ENCODE measurements at regions of chr16 and their contacts with region 1.

Region 1: GRCh38 chr16:85986931-85987749 is 88.2 kb downstream of the IRF8 start:
- DNase-seq: peak; percentile 51
- ATAC-seq: no peak
- H3K4me3 ChIP-seq: no peak overlapping the region
- H3K4me3 Mint-ChIP-seq: peak overlapping the region; percentile 83
- H3K27ac ChIP-seq: no peak overlapping the region
- H3K27ac Mint-ChIP-seq: peak overlapping the region; percentile 81
- H3K4me1 ChIP-seq: peaks cover 96 to 100% of the 10 kb centered on the region in 2 donors
- H3K4me1 Mint-ChIP-seq: peaks cover 98% of the 10 kb centered on the region
- H3K27me3 ChIP-seq: no peaks in the 10 kb centered on the region
- H3K27me3 Mint-ChIP-seq: no peaks in the 10 kb centered on the region
- CTCF ChIP-seq: no peak

Region 2: DNA sequence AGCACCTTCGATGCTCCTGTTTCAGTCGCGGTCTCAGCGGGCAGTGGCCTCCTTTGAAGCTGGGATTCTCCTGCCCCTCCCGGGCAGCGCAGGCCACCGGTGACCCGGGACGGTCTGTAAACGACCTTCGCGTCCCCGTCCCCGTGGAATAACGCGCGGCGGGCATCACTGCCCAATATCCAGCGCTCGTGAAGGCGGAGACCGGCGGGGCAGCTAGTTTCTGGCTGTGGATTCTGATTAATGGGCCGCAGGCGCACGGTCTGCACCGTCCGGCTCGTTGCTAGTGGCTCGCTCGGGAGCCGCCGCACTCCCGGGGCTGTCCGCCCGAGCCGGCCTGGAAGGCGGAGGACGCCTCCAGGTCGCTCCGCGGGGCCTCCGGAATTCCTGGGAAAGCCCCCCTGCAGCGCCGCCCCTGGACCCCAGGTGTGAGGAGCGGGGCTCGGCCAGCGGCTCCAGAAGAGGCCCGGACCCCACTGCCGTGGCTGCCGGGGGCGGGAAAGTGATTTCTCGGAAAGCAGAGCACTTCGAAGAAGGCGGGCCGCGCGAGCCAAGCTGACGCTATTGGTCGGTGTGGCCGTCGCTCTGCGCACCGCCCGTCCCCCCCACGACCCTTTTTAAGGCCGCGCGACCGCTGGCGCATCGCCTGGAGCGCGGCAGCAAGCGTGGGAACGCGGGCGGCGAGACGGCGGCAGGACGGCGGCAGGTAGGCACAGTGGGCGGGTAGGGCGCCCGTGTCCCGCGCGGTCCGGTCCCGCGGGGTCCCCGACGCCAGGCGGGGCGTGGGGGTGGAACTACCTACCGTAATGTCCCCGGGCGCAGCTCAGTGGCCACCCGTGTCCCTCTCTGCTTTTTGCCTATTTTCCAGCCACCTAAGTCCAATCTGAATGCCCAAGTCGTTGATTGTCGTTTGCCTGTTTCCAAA is 88.4 kb before region 1 on chr16 and contains the start of gene IRF8:
- CTCF ChIA-PET with region 1: interaction called, 85 read pairs
- POLR2A ChIA-PET with region 1: interaction called, 10 read pairs
- intact Hi-C with region 1: loop called (anchors 2 kb)
- DNase-seq: peak; percentile 94
- ATAC-seq: peak; percentile 65
- H3K4me3 ChIP-seq: peak within 1 kb of the TSS; percentile 77 to 99 (median 88)
- H3K4me3 Mint-ChIP-seq: peak within 1 kb of the TSS; percentile 92
- H3K27ac ChIP-seq: peak within 1 kb of the TSS; percentile 93 to 97
- H3K27ac Mint-ChIP-seq: peak within 1 kb of the TSS; percentile 98
- H3K4me1 ChIP-seq: peaks cover 41 to 52% of the 10 kb centered on the region in 2 donors
- H3K4me1 Mint-ChIP-seq: peaks cover 63% of the 10 kb centered on the region
- H3K27me3 ChIP-seq: no peaks in the 10 kb centered on the region
- H3K27me3 Mint-ChIP-seq: no peaks in the 10 kb centered on the region
- CTCF ChIP-seq: no peak
- total RNA-seq, gene IRF8: 332 and 337 TPM in 2 replicates

Region 3: GRCh38 chr16:85928401-85928820 is 58.7 kb before region 1 on chr16:
- CTCF ChIA-PET with region 1: interaction called, 10 read pairs
- POLR2A ChIA-PET with region 1: interaction called, 3 read pairs
- intact Hi-C with region 1: loop called (anchors 5 kb)
- DNase-seq: peak; percentile 53
- ATAC-seq: peak; percentile 32
- H3K4me3 ChIP-seq: no peak overlapping the region
- H3K4me3 Mint-ChIP-seq: peak overlapping the region; percentile 72
- H3K27ac ChIP-seq: no peak overlapping the region
- H3K27ac Mint-ChIP-seq: peak overlapping the region; percentile 71
- H3K4me1 ChIP-seq: peaks cover 60 to 74% of the 10 kb centered on the region in 2 donors
- H3K4me1 Mint-ChIP-seq: peaks cover 82% of the 10 kb centered on the region
- H3K27me3 ChIP-seq: no peaks in the 10 kb centered on the region
- H3K27me3 Mint-ChIP-seq: no peaks in the 10 kb centered on the region
- CTCF ChIP-seq: no peak

Region 4: DNA sequence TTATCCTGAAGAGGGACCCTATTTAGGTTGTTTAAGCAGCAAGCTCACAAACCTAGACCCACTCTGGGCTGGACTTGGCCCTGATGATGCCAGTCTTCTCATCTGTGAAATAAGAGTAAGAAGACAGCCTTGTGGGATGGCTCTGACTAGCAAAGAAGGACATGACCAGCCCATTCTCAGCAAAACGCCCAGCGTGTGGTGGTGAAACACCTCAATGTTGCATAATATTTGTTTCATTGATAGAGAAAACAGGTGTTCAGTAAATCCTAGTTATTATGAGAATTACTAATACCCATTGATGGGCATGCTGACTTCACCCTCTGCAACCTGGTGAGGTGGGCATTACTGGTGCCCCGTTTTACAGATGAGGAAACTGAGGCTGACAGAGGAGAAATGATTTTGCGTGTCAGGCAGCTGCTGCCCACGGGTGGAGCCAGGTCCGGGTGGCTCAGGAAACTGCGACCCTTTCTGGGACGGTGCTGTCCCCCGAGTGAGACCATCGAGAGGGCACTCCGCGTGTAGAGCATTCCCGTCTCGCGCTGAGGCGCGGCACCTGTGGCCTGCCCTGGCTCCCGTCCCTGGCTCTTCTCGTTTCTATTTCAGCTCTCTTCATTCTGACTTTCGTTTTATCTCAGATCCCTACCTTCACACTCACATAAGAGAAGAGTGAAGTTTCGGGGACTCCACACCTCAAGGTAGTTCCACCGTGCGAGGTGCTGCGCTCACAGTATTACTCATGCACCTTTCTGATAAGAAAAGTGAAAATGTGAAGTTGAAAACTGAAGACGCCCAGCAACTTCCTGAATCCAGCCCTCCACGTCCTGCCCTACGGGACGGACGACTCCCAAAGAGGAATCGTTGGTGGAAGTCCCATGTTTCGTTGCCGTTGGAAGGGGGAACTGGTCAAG is 39.7 kb before region 1 on chr16:
- CTCF ChIA-PET with region 1: interaction called, 18 read pairs
- POLR2A ChIA-PET with region 1: interaction called, 5 read pairs
- intact Hi-C with region 1: loop called (anchors 1 kb)
- DNase-seq: peak; percentile 87
- ATAC-seq: peak; percentile 63
- H3K4me3 ChIP-seq: peak overlapping the region; percentile 41 to 68 (median 64)
- H3K4me3 Mint-ChIP-seq: peak overlapping the region; percentile 94
- H3K27ac ChIP-seq: peak overlapping the region; percentile 88 to 92
- H3K27ac Mint-ChIP-seq: peak overlapping the region; percentile 98
- H3K4me1 ChIP-seq: peaks cover 70 to 79% of the 10 kb centered on the region in 2 donors
- H3K4me1 Mint-ChIP-seq: peaks cover 84% of the 10 kb centered on the region
- H3K27me3 ChIP-seq: no peaks in the 10 kb centered on the region
- H3K27me3 Mint-ChIP-seq: no peaks in the 10 kb centered on the region
- CTCF ChIP-seq: no peak

Region 5: DNA sequence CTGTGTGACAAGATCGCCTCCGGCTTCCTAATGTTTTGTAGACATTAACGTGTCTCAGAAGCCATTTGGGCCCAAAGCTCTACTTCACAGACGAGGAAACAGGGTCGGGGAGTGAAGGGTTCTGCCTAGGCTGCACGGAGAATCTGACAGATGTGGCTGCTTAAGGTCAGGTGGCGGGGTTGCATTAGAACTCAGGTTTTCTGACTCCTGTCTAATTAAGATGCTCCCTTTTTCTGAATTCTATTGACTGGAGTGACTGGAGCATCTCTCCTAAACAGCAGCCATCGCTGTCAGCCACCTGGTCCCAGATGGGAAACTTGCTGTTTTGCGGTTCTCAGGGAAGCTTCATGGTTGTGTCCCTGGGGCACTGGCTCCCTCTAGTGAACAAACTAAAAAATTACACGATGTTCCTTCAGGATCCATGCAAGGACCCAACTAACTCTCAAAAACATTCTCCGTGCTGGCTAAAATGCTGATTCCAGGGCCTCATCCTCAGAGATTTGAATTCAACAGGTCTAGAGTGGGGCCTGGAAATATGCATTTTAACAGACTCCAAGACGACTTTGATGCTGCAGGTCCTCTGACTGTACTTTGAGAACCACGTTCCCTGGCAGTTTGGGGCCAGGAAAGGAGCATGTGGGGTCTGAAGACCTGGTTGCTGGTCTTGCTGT is 29.2 kb after region 1 on chr16:
- CTCF ChIA-PET with region 1: interaction called, 67 read pairs
- POLR2A ChIA-PET with region 1: no interaction called
- intact Hi-C with region 1: no loop called
- DNase-seq: peak; percentile 83
- ATAC-seq: peak; percentile 61
- H3K4me3 ChIP-seq: no peak overlapping the region
- H3K4me3 Mint-ChIP-seq: no peak overlapping the region
- H3K27ac ChIP-seq: no peak overlapping the region
- H3K27ac Mint-ChIP-seq: peak overlapping the region; percentile 43
- H3K4me1 ChIP-seq: peaks cover 32 to 40% of the 10 kb centered on the region in 2 donors
- H3K4me1 Mint-ChIP-seq: peaks cover 35% of the 10 kb centered on the region
- H3K27me3 ChIP-seq: peaks cover 0 to 28% (median 5%) of the 10 kb centered on the region in 4 experiments
- H3K27me3 Mint-ChIP-seq: peaks cover 8% of the 10 kb centered on the region
- CTCF ChIP-seq: peak; percentile 87